ENCODE measurements at regions of chr6 and their contacts with region 1.

Region 1: DNA sequence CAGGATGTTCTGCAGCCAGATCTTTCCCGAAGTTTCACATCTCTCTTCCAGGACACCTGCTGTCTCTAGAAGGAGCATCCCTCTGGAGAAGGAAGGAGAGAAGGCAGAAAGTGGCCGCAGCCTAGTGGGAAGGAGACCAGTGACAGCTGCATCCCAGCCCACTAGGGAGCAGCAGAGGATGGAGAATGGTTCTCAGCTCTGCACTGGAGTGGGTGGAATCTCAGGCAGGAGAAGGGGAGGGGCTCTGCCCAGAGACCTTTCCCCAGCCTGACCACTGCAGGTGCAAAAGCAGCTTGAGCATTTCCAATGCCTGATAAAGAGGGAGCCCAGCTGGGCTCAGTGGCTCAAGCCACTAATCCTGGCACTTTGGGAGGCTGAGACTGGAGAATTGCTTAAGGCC is 32.3 kb downstream of the NCR2 start:
- DNase-seq: no peak
- ATAC-seq: peak; percentile 76
- H3K4me3 ChIP-seq: no peak overlapping the region
- H3K27ac ChIP-seq: no peak overlapping the region
- H3K4me1 ChIP-seq: no peaks in the 10 kb centered on the region
- H3K27me3 ChIP-seq: peaks cover 6 to 9% of the 10 kb centered on the region in 2 experiments; a peak in 3 of 4 replicates
- CTCF ChIP-seq: peak; percentile 46 to 68 (median 50); a peak in 4 of 6 replicates
- EP300 ChIP-seq: no peak
- POLR2A ChIP-seq: no peak
- RAD21 ChIP-seq: peak; percentile 65

Region 2: DNA sequence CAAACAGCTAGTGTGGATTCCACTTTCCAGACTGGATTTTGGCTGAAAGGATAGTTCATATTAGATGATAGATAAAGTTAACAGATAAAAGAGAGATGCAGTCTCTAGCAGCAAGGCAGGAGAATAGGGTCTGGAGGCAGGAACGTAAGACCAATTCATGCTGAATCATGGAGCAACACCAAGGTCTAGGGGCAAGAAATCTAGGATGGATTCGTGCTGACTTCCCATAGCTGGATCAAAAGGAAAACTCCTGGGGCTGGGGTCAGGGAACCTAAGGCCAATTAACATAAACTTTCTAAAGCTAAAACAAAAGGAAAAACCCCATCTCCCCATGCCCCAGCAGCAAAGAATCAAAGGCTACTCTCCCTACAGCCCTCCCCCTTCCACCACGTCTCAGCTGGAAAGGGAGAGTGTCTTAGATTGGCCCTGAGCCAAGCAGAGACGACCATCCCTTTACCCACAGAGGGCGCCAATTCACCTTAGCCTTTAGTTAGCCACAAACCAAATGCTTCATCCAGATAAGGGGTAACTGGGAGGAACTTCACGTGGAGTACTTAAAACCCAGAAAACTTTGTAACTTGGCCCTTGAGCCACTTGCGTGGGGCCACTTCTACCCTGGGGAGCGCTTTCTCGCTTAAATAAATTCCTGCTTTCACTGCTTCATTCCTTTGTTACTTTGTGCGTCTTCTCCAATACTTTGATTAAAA is 88.8 kb before region 1 on chr6:
- CTCF ChIA-PET with region 1: interaction called, 16 read pairs
- POLR2A ChIA-PET with region 1: no interaction called
- RAD21 ChIA-PET with region 1: interaction called, 3 read pairs
- SMC1A ChIA-PET with region 1: interaction called, 3 read pairs
- in situ Hi-C with region 1: no loop called
- intact Hi-C with region 1: no loop called
- DNase-seq: no peak
- ATAC-seq: peak; percentile 78
- H3K4me3 ChIP-seq: no peak overlapping the region
- H3K27ac ChIP-seq: no peak overlapping the region
- H3K4me1 ChIP-seq: no peaks in the 10 kb centered on the region
- H3K27me3 ChIP-seq: no peaks in the 10 kb centered on the region
- CTCF ChIP-seq: peak; percentile 58 to 65 (median 65)
- EP300 ChIP-seq: no peak
- POLR2A ChIP-seq: no peak
- RAD21 ChIP-seq: peak; percentile 79

Region 3: DNA sequence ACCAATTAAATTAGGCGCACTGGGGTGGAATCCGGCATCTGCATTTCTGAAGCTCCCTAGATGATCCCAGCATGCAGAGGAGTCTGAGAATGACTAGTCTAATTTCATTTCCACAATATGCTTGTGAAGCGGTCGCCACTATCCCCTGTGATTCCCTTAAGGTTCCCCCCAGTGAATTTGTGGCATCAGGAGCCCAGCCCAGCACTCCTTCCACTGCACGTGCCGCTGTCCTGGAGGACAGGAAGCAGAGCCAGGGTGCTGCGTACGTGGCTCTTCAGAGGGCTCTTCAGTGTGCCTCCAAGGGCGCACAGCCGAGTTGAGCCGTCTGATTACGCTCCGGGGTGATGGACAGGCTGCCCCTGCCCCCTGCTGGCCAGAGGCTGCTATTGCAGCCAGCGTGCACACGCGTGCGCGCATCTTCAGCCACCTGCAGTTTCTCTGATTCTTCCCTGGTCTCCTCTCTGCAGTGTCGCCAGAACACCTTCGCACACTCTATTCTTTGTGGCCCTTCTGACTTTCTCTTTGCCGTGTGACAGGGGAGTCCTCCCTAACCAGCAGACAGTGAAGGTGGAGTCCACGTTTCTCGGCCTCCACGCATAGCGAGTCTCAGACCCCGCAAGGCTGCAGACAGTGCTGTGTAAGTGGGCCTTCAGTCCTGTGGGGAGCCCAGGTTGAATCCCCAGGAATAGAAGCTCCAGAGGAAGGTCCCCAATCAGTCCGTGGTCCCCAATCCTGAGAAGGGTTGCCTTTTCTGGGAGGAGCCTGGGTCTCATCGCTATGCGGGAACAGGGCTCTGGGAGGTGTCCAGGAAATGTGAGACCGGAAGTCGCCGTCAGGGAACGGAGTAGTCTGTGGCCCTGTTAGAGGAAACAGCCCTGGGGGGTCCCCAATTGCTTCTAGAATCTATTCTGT is 48.8 kb before region 1 on chr6:
- CTCF ChIA-PET with region 1: interaction called, 37 read pairs
- POLR2A ChIA-PET with region 1: no interaction called
- RAD21 ChIA-PET with region 1: interaction called, 13 read pairs
- SMC1A ChIA-PET with region 1: interaction called, 26 read pairs
- in situ Hi-C with region 1: no loop called
- intact Hi-C with region 1: no loop called
- DNase-seq: peak; percentile 62
- ATAC-seq: peak; percentile 98
- H3K4me3 ChIP-seq: no peak overlapping the region
- H3K27ac ChIP-seq: no peak overlapping the region
- H3K4me1 ChIP-seq: peaks cover 7% of the 10 kb centered on the region; the same call in 1 of the 2 replicates
- H3K27me3 ChIP-seq: 0 out of 4 replicates have a peak, but pooled peaks cover 0 to 2% of the 10 kb centered on the region in 2 experiments
- CTCF ChIP-seq: peak; percentile 90 to 100 (median 100)
- EP300 ChIP-seq: no peak
- POLR2A ChIP-seq: no peak
- RAD21 ChIP-seq: peak; percentile 94

Region 4: DNA sequence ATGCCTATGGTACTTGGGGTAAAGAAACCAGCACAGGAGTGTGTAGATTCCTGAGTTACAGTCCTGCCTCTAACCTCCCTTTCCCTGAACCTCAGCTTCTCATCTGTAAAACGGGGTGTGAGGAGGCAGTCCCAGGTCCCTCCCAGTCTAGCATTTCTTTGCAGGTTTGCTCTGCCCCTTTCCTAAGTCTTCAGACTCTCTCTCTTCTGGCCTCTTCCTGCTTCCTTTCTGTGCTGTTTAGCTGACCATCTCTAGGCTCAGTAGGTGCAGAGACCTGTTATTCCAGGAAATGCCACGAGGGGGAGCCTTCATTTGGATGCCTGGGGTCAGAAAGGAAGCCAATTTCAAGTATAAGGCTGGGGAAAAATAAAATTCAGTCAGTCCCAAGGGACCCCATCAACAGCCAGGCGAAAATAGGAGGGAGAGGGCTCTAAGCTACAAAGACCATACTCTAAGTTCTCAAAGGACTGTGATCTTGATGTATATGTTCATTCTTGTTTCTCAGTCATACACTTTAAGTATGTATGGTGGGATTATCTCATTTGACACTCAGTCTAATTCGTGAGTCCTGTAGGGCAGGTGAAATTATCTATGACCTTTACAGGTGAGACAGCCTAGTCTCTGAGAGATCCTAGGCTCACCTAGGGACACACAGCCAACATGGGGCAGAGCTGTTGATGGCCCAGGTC is 56.8 kb after region 1 on chr6:
- CTCF ChIA-PET with region 1: interaction called, 25 read pairs
- POLR2A ChIA-PET with region 1: no interaction called
- RAD21 ChIA-PET with region 1: interaction called, 6 read pairs
- SMC1A ChIA-PET with region 1: interaction called, 6 read pairs
- in situ Hi-C with region 1: no loop called
- intact Hi-C with region 1: no loop called
- DNase-seq: peak; percentile 31
- ATAC-seq: peak; percentile 71
- H3K4me3 ChIP-seq: no peak overlapping the region
- H3K27ac ChIP-seq: no peak overlapping the region
- H3K4me1 ChIP-seq: peaks cover 10% of the 10 kb centered on the region
- H3K27me3 ChIP-seq: peaks cover 7 to 20% of the 10 kb centered on the region in 2 experiments
- CTCF ChIP-seq: peak; percentile 84 to 87 (median 86)
- EP300 ChIP-seq: no peak
- POLR2A ChIP-seq: no peak
- RAD21 ChIP-seq: peak; percentile 82

Region 5: DNA sequence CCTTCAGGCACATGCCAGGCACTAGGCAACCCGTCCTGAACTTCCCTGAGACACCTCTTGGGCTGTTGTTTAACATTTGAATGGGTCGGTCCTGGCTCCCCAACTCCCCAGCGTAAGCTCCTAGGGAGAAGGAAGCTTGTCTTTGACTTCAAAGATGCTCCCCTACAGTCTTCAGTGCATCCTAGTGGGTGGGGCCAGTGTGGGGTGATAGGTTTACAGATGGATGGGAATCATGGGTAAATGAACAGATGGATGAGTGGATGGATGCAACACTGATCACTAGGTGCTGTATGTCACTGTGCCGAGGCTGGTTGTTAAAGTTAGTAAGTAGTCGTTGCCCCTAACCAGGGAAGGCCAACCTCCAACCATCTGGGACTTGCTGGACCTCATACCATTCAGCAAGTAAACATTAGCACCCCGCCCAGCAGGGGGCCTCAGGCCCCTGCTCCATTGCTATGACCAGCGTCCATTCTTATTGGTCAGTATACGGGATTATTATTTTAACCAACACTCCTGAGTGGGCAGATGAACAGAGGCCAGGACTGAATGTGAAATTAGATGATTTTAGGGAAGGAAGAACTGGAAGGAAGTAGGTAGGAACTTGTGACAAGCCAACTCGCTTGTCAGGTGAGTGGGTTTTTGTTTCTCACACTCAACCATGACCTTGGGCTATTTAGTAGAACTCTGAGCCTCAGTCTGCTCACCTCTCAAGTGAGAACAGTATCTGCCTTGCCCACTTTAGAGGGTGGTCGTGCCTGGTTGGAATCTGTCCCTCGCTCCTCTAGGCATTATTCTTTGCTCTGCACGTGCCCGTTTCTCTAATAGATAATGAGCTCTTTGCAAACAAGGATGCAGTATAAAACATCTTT is 95.6 kb after region 1 on chr6:
- CTCF ChIA-PET with region 1: interaction called, 10 read pairs
- POLR2A ChIA-PET with region 1: no interaction called
- RAD21 ChIA-PET with region 1: interaction called, 5 read pairs
- SMC1A ChIA-PET with region 1: interaction called, 3 read pairs
- in situ Hi-C with region 1: no loop called
- intact Hi-C with region 1: no loop called
- DNase-seq: no peak
- ATAC-seq: peak; percentile 99
- H3K4me3 ChIP-seq: no peak overlapping the region
- H3K27ac ChIP-seq: no peak overlapping the region
- H3K4me1 ChIP-seq: no peaks in the 10 kb centered on the region
- H3K27me3 ChIP-seq: peaks cover 0 to 3% of the 10 kb centered on the region in 2 experiments; a peak in 1 of 4 replicates
- CTCF ChIP-seq: peak; percentile 74 to 82 (median 81)
- EP300 ChIP-seq: no peak
- POLR2A ChIP-seq: no peak
- RAD21 ChIP-seq: peak; percentile 96

Region 6: GRCh38 chr6:41683510-41684310 is 316.0 kb after region 1 on chr6:
- CTCF ChIA-PET with region 1: interaction called, 31 read pairs
- POLR2A ChIA-PET with region 1: no interaction called
- RAD21 ChIA-PET with region 1: interaction called, 7 read pairs
- SMC1A ChIA-PET with region 1: interaction called, 5 read pairs
- in situ Hi-C with region 1: no loop called
- intact Hi-C with region 1: loop called (anchors 1 kb)
- DNase-seq: no peak
- ATAC-seq: peak; percentile 93
- H3K4me3 ChIP-seq: no peak overlapping the region
- H3K27ac ChIP-seq: no peak overlapping the region
- H3K4me1 ChIP-seq: no peaks in the 10 kb centered on the region
- H3K27me3 ChIP-seq: no peaks in the 10 kb centered on the region
- CTCF ChIP-seq: peak; percentile 85 to 93 (median 92)
- EP300 ChIP-seq: no peak
- POLR2A ChIP-seq: peak; percentile 73
- RAD21 ChIP-seq: peak; percentile 72

Measured in GM12878 (cell line).